ENCODE measurements at regions of chr15 and their contacts with region 1.

Region 1: GRCh38 chr15:31365655-31366127 is 39.1 kb downstream of the KLF13 start:
- DNase-seq: peak; percentile 59 to 90 (median 74)
- ATAC-seq: peak; percentile 51
- H3K4me3 ChIP-seq: peak overlapping the region; percentile 31
- H3K4me3 Mint-ChIP-seq: peak overlapping the region; percentile 82
- H3K27ac ChIP-seq: peak overlapping the region; percentile 72 to 86
- H3K27ac Mint-ChIP-seq: peak overlapping the region; percentile 90
- H3K4me1 ChIP-seq: peaks cover 98% of the 10 kb centered on the region
- H3K4me1 Mint-ChIP-seq: peaks cover 98% of the 10 kb centered on the region
- H3K27me3 ChIP-seq: no peaks in the 10 kb centered on the region
- H3K27me3 Mint-ChIP-seq: no peaks in the 10 kb centered on the region
- CTCF ChIP-seq: peak; percentile 58

Region 2: GRCh38 chr15:31332020-31332680 is 33.5 kb before region 1 on chr15:
- CTCF ChIA-PET with region 1: interaction called, 5 read pairs
- POLR2A ChIA-PET with region 1: interaction called, 566 read pairs
- intact Hi-C with region 1: loop called (anchors 1 to 2 kb)
- DNase-seq: no peak
- ATAC-seq: no peak
- H3K4me3 ChIP-seq: peak overlapping the region; percentile 84
- H3K4me3 Mint-ChIP-seq: peak overlapping the region; percentile 93
- H3K27ac ChIP-seq: peak overlapping the region; percentile 18 to 37
- H3K27ac Mint-ChIP-seq: peak overlapping the region; percentile 97
- H3K4me1 ChIP-seq: peaks cover 84% of the 10 kb centered on the region
- H3K4me1 Mint-ChIP-seq: peaks cover 86% of the 10 kb centered on the region
- H3K27me3 ChIP-seq: no peaks in the 10 kb centered on the region
- H3K27me3 Mint-ChIP-seq: no peaks in the 10 kb centered on the region
- CTCF ChIP-seq: no peak

Region 3: DNA sequence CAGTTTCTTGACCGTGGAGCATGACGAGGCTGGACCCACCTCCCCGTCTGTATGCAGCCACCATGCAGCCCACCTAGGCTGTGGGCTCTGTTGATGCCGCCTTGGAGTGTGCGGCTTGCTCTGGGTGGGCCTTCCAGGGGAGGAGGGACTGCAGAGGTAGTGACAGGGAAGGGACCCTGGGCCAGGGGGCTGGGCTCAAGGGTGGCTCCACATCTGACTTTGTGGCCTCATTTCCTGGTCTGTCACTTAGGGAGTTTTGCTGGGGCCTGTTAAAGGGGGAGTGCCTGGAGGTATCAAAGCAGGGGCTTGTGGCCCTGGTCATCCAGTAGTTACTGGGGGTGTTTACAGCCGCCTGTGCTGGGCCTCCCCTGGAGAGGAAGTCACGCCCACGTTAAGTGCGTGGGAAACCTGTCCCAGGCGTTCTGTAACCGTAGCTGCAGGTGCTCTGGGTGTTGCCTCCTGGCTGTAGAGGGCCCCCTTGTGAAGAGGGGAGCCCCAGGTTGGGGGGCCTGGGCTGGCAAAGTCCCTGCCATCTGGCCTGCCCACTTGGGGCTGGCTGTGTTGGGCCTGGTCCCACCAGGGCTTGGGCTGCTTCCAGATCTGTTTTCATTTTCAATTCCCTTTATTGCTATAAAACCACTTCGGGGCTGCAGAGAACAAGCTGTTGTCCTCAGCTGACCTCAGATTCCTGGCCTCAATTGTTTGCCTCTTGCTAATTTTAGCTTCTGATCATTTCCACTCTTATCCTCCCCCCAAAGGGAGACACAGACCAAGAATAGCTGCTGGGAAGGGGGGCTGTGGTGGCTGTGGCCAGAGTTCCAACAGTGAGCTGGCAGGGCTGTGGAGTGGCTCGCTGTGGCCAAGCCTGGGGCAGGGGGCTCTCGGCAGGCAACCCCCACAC is 12.5 kb before region 1 on chr15:
- CTCF ChIA-PET with region 1: interaction called, 17 read pairs
- POLR2A ChIA-PET with region 1: interaction called, 275 read pairs
- intact Hi-C with region 1: loop called in 1 of 2 experiments (anchors 1 kb)
- DNase-seq: peak in 6 of 14 experiments; percentile 48 to 77 (median 64)
- ATAC-seq: peak; percentile 57
- H3K4me3 ChIP-seq: peak overlapping the region; percentile 21
- H3K4me3 Mint-ChIP-seq: peak overlapping the region; percentile 85
- H3K27ac ChIP-seq: peak overlapping the region; percentile 78 to 93
- H3K27ac Mint-ChIP-seq: peak overlapping the region; percentile 90
- H3K4me1 ChIP-seq: peaks cover 100% of the 10 kb centered on the region
- H3K4me1 Mint-ChIP-seq: peaks cover 97% of the 10 kb centered on the region
- H3K27me3 ChIP-seq: no peaks in the 10 kb centered on the region
- H3K27me3 Mint-ChIP-seq: no peaks in the 10 kb centered on the region
- CTCF ChIP-seq: no peak

Region 4: GRCh38 chr15:31435261-31435911 is 69.7 kb after region 1 on chr15:
- CTCF ChIA-PET with region 1: interaction called, 26 read pairs
- POLR2A ChIA-PET with region 1: interaction called, 216 read pairs
- intact Hi-C with region 1: loop called (anchors 1 to 2 kb)
- DNase-seq: peak; percentile 61 to 93 (median 80)
- ATAC-seq: peak; percentile 75
- H3K4me3 ChIP-seq: peak overlapping the region; percentile 55
- H3K4me3 Mint-ChIP-seq: peak overlapping the region; percentile 84
- H3K27ac ChIP-seq: peak overlapping the region; percentile 88 to 92
- H3K27ac Mint-ChIP-seq: peak overlapping the region; percentile 98
- H3K4me1 ChIP-seq: peaks cover 78% of the 10 kb centered on the region
- H3K4me1 Mint-ChIP-seq: peaks cover 76% of the 10 kb centered on the region
- H3K27me3 ChIP-seq: no peaks in the 10 kb centered on the region
- H3K27me3 Mint-ChIP-seq: no peaks in the 10 kb centered on the region
- CTCF ChIP-seq: peak; percentile 45

Region 5: GRCh38 chr15:31483053-31483985 is 117.6 kb after region 1 on chr15:
- CTCF ChIA-PET with region 1: interaction called, 28 read pairs
- POLR2A ChIA-PET with region 1: interaction called, 38 read pairs
- intact Hi-C with region 1: loop called (anchors 1 to 2 kb)
- DNase-seq: peak in 13 of 14 experiments; percentile 25 to 85 (median 48)
- ATAC-seq: peak; percentile 67
- H3K4me3 ChIP-seq: peak overlapping the region; percentile 57
- H3K4me3 Mint-ChIP-seq: peak overlapping the region; percentile 99
- H3K27ac ChIP-seq: no peak overlapping the region
- H3K27ac Mint-ChIP-seq: peak overlapping the region; percentile 94
- H3K4me1 ChIP-seq: peaks cover 48% of the 10 kb centered on the region
- H3K4me1 Mint-ChIP-seq: peaks cover 48% of the 10 kb centered on the region
- H3K27me3 ChIP-seq: no peaks in the 10 kb centered on the region
- H3K27me3 Mint-ChIP-seq: no peaks in the 10 kb centered on the region
- CTCF ChIP-seq: no peak

Measured in CD4-positive, alpha-beta T cell (primary cell).